B cell (primary cell): ENCODE measurements at regions of chr16 and their contacts with region 1.

Region 1: GRCh38 chr16:67546761-67547422 is 15.4 kb upstream of the CTCF start:
- DNase-seq: peak; percentile 87
- ATAC-seq: peak; percentile 12
- H3K4me3 ChIP-seq: peak overlapping the region in 4 of 5 experiments; percentile 26 to 41 (median 39)
- H3K4me3 Mint-ChIP-seq: peak overlapping the region; percentile 85
- H3K27ac ChIP-seq: peak overlapping the region; percentile 91 to 95
- H3K27ac Mint-ChIP-seq: peak overlapping the region; percentile 98
- H3K4me1 ChIP-seq: peaks cover 83 to 94% of the 10 kb centered on the region in 2 donors
- H3K4me1 Mint-ChIP-seq: peaks cover 85% of the 10 kb centered on the region
- H3K27me3 ChIP-seq: no peaks in the 10 kb centered on the region
- H3K27me3 Mint-ChIP-seq: no peaks in the 10 kb centered on the region
- CTCF ChIP-seq: peak; percentile 100

Region 2: GRCh38 chr16:67339453-67339852 is 207.4 kb before region 1 on chr16:
- CTCF ChIA-PET with region 1: no interaction called
- POLR2A ChIA-PET with region 1: no interaction called
- intact Hi-C with region 1: no loop called
- DNase-seq: peak; percentile 16
- ATAC-seq: no peak
- H3K4me3 ChIP-seq: no peak overlapping the region
- H3K4me3 Mint-ChIP-seq: no peak overlapping the region
- H3K27ac ChIP-seq: no peak overlapping the region
- H3K27ac Mint-ChIP-seq: no peak overlapping the region
- H3K4me1 ChIP-seq: no peaks in the 10 kb centered on the region
- H3K4me1 Mint-ChIP-seq: no peaks in the 10 kb centered on the region
- H3K27me3 ChIP-seq: no peaks in the 10 kb centered on the region
- H3K27me3 Mint-ChIP-seq: peaks cover 11% of the 10 kb centered on the region
- CTCF ChIP-seq: no peak

Region 3: GRCh38 chr16:67490335-67491096 is 56.4 kb before region 1 on chr16:
- CTCF ChIA-PET with region 1: interaction called, 25 read pairs
- POLR2A ChIA-PET with region 1: interaction called, 7 read pairs
- intact Hi-C with region 1: loop called (anchors 2 kb)
- DNase-seq: no peak
- ATAC-seq: no peak
- H3K4me3 ChIP-seq: no peak overlapping the region
- H3K4me3 Mint-ChIP-seq: peak overlapping the region; percentile 51
- H3K27ac ChIP-seq: peak overlapping the region; percentile 70 to 89
- H3K27ac Mint-ChIP-seq: peak overlapping the region; percentile 82
- H3K4me1 ChIP-seq: peaks cover 73 to 84% of the 10 kb centered on the region in 2 donors
- H3K4me1 Mint-ChIP-seq: peaks cover 71% of the 10 kb centered on the region
- H3K27me3 ChIP-seq: no peaks in the 10 kb centered on the region
- H3K27me3 Mint-ChIP-seq: no peaks in the 10 kb centered on the region
- CTCF ChIP-seq: no peak

Region 4: DNA sequence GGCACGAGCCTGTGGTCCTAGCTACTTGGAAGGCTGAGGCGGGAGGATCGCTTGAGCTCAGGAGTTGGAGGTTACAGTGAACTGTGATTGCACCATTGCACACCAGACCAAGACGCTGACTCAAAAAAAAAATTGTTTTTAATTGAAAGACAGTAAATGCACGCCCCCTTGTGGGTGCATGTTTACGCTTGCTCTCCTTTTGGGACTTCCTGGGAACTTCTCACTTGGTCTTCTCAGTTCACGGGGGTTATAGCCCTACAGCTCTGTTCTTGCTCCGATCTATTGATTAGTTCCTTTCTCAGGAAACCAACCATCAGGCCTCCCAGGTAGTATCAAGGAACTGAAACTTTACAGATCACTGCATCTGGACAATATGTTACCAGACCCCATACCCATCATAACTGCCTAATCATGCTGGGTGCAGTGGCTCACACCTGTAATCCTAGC is 32.5 kb before region 1 on chr16:
- CTCF ChIA-PET with region 1: interaction called, 163 read pairs
- POLR2A ChIA-PET with region 1: interaction called, 7 read pairs
- intact Hi-C with region 1: no loop called
- DNase-seq: peak; percentile 89
- ATAC-seq: peak; percentile 14
- H3K4me3 ChIP-seq: no peak overlapping the region
- H3K4me3 Mint-ChIP-seq: peak overlapping the region; percentile 66
- H3K27ac ChIP-seq: peak overlapping the region; percentile 59 to 67
- H3K27ac Mint-ChIP-seq: peak overlapping the region; percentile 96
- H3K4me1 ChIP-seq: peaks cover 64 to 76% of the 10 kb centered on the region in 2 donors
- H3K4me1 Mint-ChIP-seq: peaks cover 64% of the 10 kb centered on the region
- H3K27me3 ChIP-seq: no peaks in the 10 kb centered on the region
- H3K27me3 Mint-ChIP-seq: no peaks in the 10 kb centered on the region
- CTCF ChIP-seq: peak; percentile 68

Region 5: GRCh38 chr16:67530013-67530939 is 16.6 kb before region 1 on chr16:
- CTCF ChIA-PET with region 1: interaction called, 178 read pairs
- POLR2A ChIA-PET with region 1: interaction called, 83 read pairs
- intact Hi-C with region 1: loop called (anchors 1 kb)
- DNase-seq: peak; percentile 94
- ATAC-seq: peak; percentile 59
- H3K4me3 ChIP-seq: peak overlapping the region; percentile 65 to 92 (median 85)
- H3K4me3 Mint-ChIP-seq: peak overlapping the region; percentile 95
- H3K27ac ChIP-seq: peak overlapping the region; percentile 96 to 100
- H3K27ac Mint-ChIP-seq: peak overlapping the region; percentile 98
- H3K4me1 ChIP-seq: peaks cover 38 to 70% of the 10 kb centered on the region in 2 donors
- H3K4me1 Mint-ChIP-seq: peaks cover 63% of the 10 kb centered on the region
- H3K27me3 ChIP-seq: no peaks in the 10 kb centered on the region
- H3K27me3 Mint-ChIP-seq: no peaks in the 10 kb centered on the region
- CTCF ChIP-seq: no peak

Region 6: GRCh38 chr16:67608364-67608763 is 61.5 kb after region 1 on chr16:
- CTCF ChIA-PET with region 1: interaction called, 10 read pairs
- POLR2A ChIA-PET with region 1: no interaction called
- intact Hi-C with region 1: no loop called
- DNase-seq: no peak
- ATAC-seq: no peak
- H3K4me3 ChIP-seq: no peak overlapping the region
- H3K4me3 Mint-ChIP-seq: no peak overlapping the region
- H3K27ac ChIP-seq: no peak overlapping the region
- H3K27ac Mint-ChIP-seq: no peak overlapping the region
- H3K4me1 ChIP-seq: peaks cover 4 to 5% of the 10 kb centered on the region in 2 donors
- H3K4me1 Mint-ChIP-seq: peaks cover 18% of the 10 kb centered on the region
- H3K27me3 ChIP-seq: no peaks in the 10 kb centered on the region
- H3K27me3 Mint-ChIP-seq: no peaks in the 10 kb centered on the region
- CTCF ChIP-seq: no peak

Region 7: GRCh38 chr16:67641779-67642708 is 95.2 kb after region 1 on chr16:
- CTCF ChIA-PET with region 1: interaction called, 220 read pairs
- POLR2A ChIA-PET with region 1: interaction called, 50 read pairs
- intact Hi-C with region 1: loop called (anchors 1 kb)
- DNase-seq: no peak
- ATAC-seq: no peak
- H3K4me3 ChIP-seq: no peak overlapping the region
- H3K4me3 Mint-ChIP-seq: no peak overlapping the region
- H3K27ac ChIP-seq: no peak overlapping the region
- H3K27ac Mint-ChIP-seq: no peak overlapping the region
- H3K4me1 ChIP-seq: peaks cover 12 to 20% of the 10 kb centered on the region in 2 donors
- H3K4me1 Mint-ChIP-seq: peaks cover 16% of the 10 kb centered on the region
- H3K27me3 ChIP-seq: no peaks in the 10 kb centered on the region
- H3K27me3 Mint-ChIP-seq: no peaks in the 10 kb centered on the region
- CTCF ChIP-seq: no peak

Region 8: GRCh38 chr16:67667817-67668494 is 121.1 kb after region 1 on chr16:
- CTCF ChIA-PET with region 1: interaction called, 75 read pairs
- POLR2A ChIA-PET with region 1: interaction called, 7 read pairs
- intact Hi-C with region 1: loop called (anchors 1 kb)
- DNase-seq: peak; percentile 89
- ATAC-seq: peak; percentile 81
- H3K4me3 ChIP-seq: peak overlapping the region in 4 of 5 experiments; percentile 67 to 91 (median 80)
- H3K4me3 Mint-ChIP-seq: peak overlapping the region; percentile 91
- H3K27ac ChIP-seq: peak overlapping the region; percentile 77 to 86
- H3K27ac Mint-ChIP-seq: peak overlapping the region; percentile 84
- H3K4me1 ChIP-seq: peaks cover 36 to 49% of the 10 kb centered on the region in 2 donors
- H3K4me1 Mint-ChIP-seq: peaks cover 49% of the 10 kb centered on the region
- H3K27me3 ChIP-seq: no peaks in the 10 kb centered on the region
- H3K27me3 Mint-ChIP-seq: no peaks in the 10 kb centered on the region
- CTCF ChIP-seq: peak; percentile 75